ENCODE measurements at regions of chr5 and their contacts with region 1.

Region 1: GRCh38 chr5:73088026-73088425 is 32.3 kb upstream of the TMEM171 start:
- DNase-seq: no peak
- ATAC-seq: no peak
- H3K4me3 ChIP-seq: no peak overlapping the region
- H3K27ac ChIP-seq: no peak overlapping the region
- H3K4me1 ChIP-seq: peaks cover 0 to 2% of the 10 kb centered on the region in 2 experiments; a peak in 1 of 4 replicates
- H3K27me3 ChIP-seq: no peaks in the 10 kb centered on the region
- CTCF ChIP-seq: no peak
- POLR2A ChIP-seq: no peak
- RAD21 ChIP-seq: no peak

Region 2: DNA sequence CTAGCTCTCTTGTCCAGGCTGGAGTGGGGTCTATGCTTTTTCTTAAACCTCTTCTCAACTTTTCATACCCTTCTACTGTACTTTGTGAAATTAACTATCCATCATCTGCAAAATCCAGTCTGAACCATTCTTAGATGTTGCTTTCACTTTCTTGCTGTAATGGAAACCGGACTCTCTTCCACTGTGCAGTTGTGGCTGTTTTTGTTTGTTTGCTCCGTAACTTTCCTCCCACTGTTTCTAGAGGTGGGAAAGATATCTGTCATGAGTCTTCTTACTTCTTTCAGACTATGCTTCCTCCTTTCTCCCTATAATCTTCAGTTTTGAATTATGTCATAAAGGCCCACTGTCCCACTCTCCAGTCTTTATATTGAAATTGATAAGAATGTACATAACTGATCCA is 265.1 kb before region 1 on chr5:
- CTCF ChIA-PET with region 1: no interaction called
- POLR2A ChIA-PET with region 1: no interaction called
- RAD21 ChIA-PET with region 1: no interaction called
- intact Hi-C with region 1: no loop called
- DNase-seq: no peak
- ATAC-seq: no peak
- H3K4me3 ChIP-seq: no peak overlapping the region
- H3K27ac ChIP-seq: no peak overlapping the region
- H3K4me1 ChIP-seq: peaks cover 8 to 11% of the 10 kb centered on the region in 2 experiments; a peak in 2 of 4 replicates
- H3K27me3 ChIP-seq: no peaks in the 10 kb centered on the region
- CTCF ChIP-seq: no peak
- POLR2A ChIP-seq: no peak
- RAD21 ChIP-seq: no peak

Region 3: DNA sequence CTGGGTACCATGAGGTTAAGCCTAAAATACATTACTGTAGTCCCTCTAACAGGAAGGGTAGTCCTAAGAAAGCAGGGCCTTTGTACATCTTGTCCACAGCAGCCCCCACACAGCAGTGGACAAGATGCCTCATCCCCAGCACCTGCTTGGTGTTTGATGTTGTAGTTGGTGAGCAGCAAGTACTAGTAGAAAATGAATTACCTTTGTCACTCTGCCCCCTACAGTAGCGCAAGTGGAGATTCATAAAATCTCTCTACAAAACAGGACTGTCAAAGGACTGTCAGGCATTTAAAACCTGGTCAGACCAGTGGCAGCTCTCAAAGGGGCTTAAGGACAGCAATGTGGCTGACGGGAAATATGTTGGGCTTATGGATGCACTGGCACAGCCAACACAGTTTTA is 207.4 kb after region 1 on chr5:
- CTCF ChIA-PET with region 1: interaction called, 4 read pairs
- POLR2A ChIA-PET with region 1: no interaction called
- RAD21 ChIA-PET with region 1: no interaction called
- intact Hi-C with region 1: loop called (anchors 2 kb)
- DNase-seq: no peak
- ATAC-seq: peak; percentile 49; the same call in 1 of the 2 replicates
- H3K4me3 ChIP-seq: no peak overlapping the region
- H3K27ac ChIP-seq: no peak overlapping the region
- H3K4me1 ChIP-seq: peaks cover 0 to 14% of the 10 kb centered on the region in 2 experiments; a peak in 1 of 4 replicates
- H3K27me3 ChIP-seq: no peaks in the 10 kb centered on the region
- CTCF ChIP-seq: peak in 2 of 3 experiments; percentile 18 to 30; a peak in 2 of 6 replicates
- POLR2A ChIP-seq: no peak
- RAD21 ChIP-seq: peak; percentile 56

Region 4: GRCh38 chr5:73344835-73345234 is 256.8 kb after region 1 on chr5:
- CTCF ChIA-PET with region 1: no interaction called
- POLR2A ChIA-PET with region 1: no interaction called
- RAD21 ChIA-PET with region 1: no interaction called
- intact Hi-C with region 1: no loop called
- DNase-seq: no peak
- ATAC-seq: no peak
- H3K4me3 ChIP-seq: no peak overlapping the region
- H3K27ac ChIP-seq: no peak overlapping the region
- H3K4me1 ChIP-seq: no peaks in the 10 kb centered on the region
- H3K27me3 ChIP-seq: no peaks in the 10 kb centered on the region
- CTCF ChIP-seq: no peak
- POLR2A ChIP-seq: no peak
- RAD21 ChIP-seq: no peak